CD14-positive monocyte (primary cell): ENCODE measurements at regions of chr1 and their contacts with region 1.

Region 1: DNA sequence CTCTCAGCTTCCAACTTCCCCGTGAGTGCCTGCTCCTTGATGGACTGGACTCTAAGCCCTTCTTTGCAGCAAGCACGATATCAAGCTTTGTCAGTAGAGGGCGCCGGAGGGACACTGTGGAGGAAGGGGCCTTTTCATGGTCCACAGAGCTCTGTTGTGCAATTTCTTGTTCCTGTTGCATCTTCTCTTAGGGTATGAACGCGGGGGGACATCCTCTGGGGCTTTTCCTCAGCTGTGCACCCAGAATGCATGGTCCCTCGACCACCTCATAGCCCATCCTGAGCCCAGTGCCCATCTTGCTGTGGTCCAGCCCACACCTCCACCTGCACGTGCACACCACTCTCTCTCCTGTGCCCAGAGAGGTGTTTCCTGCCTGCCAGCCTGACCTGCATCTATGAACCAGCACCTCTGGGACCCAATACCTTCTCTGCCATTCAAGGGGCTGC is 556.8 kb downstream of the PTPRU start:
- DNase-seq: peak; percentile 49 to 66 (median 59)
- H3K4me3 ChIP-seq: no peak overlapping the region
- H3K4me3 Mint-ChIP-seq: no peak overlapping the region
- H3K27ac ChIP-seq: no peak overlapping the region
- H3K27ac Mint-ChIP-seq: no peak overlapping the region
- H3K4me1 ChIP-seq: no peaks in the 10 kb centered on the region
- H3K4me1 Mint-ChIP-seq: peaks cover 3% of the 10 kb centered on the region
- H3K27me3 ChIP-seq: no peaks in the 10 kb centered on the region
- H3K27me3 Mint-ChIP-seq: peaks cover 4 to 12% (median 5%) of the 10 kb centered on the region in 3 donors
- CTCF ChIP-seq: peak; percentile 85

Region 2: DNA sequence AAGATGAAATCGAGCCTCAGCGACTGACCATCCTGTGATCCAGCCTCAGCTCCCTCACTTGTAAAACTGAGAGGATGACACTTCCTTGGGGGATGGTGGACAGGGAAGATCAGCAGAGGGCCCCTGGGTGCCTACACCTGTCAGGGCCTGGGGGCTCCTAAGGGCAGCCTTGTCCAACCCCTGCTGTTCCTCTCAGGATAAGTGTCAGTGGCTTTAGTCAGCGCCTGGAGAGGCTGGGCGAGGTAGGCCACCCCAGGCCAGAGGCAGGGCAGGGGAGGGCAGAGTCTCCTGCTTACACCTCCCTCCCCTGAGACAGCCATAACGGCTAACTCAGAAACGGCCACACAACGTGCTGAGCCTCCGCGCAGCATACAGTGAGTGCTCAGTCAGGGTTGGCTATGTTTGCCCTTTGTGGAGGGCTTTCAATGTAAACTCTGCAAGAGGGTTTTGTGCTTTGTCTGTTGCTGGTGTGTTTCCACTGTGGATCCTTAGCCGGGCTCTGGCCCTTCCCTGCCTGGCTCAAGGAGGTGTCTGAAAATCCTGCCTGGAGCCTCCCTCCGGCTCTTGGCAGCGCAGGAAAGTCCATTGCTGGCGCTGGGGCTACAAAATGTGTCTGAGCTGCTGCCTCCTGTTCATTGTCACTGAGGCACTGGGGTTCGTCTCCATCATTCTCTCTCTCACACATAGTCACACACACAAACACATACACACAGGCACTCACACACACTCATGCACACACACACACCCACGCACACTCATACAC is 31.6 kb after region 1 on chr1:
- intact Hi-C with region 1: no loop called
- DNase-seq: no peak
- H3K4me3 ChIP-seq: no peak overlapping the region
- H3K4me3 Mint-ChIP-seq: no peak overlapping the region
- H3K27ac ChIP-seq: no peak overlapping the region
- H3K27ac Mint-ChIP-seq: no peak overlapping the region
- H3K4me1 ChIP-seq: no peaks in the 10 kb centered on the region
- H3K4me1 Mint-ChIP-seq: no peaks in the 10 kb centered on the region
- H3K27me3 ChIP-seq: peaks cover 0 to 6% of the 10 kb centered on the region in 2 donors
- H3K27me3 Mint-ChIP-seq: peaks cover 2 to 8% (median 2%) of the 10 kb centered on the region in 3 donors
- CTCF ChIP-seq: no peak

Region 3: GRCh38 chr1:30085811-30086770 is 293.0 kb after region 1 on chr1:
- intact Hi-C with region 1: loop called in 1 of 2 experiments (anchors 10 kb)
- DNase-seq: peak in 1 of 3 donors; percentile 20
- H3K4me3 ChIP-seq: no peak overlapping the region
- H3K4me3 Mint-ChIP-seq: no peak overlapping the region
- H3K27ac ChIP-seq: no peak overlapping the region
- H3K27ac Mint-ChIP-seq: no peak overlapping the region
- H3K4me1 ChIP-seq: no peaks in the 10 kb centered on the region
- H3K4me1 Mint-ChIP-seq: peaks cover 7% of the 10 kb centered on the region
- H3K27me3 ChIP-seq: no peaks in the 10 kb centered on the region
- H3K27me3 Mint-ChIP-seq: peaks cover 12 to 27% (median 15%) of the 10 kb centered on the region in 3 donors
- CTCF ChIP-seq: peak; percentile 69

Region 4: DNA sequence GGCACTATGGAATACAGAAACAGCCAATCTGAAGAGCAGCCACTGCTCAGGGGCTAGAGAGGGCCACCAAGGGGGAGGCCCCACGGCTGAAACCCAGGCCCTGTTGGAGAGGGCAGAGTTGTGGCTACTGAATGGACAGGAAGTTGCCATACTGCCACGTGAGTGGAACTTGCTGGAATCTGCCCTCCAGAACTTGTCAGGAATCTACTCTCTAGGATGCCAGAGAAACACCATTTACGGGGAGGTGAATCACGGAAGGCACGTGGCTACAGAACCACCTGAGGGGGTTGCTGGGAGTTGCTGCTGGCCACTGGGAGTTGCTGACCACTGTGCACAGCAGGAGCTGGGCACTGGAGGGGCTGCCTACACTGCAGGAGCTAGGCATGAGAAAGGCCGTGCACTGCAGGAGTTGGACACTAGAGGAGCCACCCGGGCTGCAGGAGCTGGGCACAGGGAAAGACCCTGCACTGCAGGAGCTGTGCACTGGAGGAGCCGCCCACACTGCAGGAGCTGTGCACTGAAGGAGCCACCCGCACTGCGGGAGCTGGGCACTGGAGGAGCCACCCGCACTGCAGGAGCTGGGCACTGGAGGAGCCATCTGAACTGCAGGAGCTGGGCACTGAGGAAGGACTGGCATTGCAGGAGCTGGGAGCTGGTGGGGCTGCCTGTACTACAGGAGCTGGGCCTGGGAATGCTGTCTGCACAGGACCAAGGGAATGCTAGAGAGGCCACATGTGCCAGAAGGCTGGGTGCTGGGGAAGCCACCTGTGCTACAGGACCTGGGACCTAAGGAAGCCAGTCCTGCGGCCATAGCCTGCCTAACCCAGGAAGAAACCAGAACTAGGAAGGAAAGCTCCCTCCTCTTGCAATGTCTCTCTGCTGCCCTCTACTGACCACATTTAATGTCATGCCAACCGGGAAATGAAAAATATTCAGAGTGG is 586.8 kb after region 1 on chr1:
- intact Hi-C with region 1: loop called in 1 of 2 experiments (anchors 5 kb)
- DNase-seq: peak; percentile 44 to 59 (median 46)
- H3K4me3 ChIP-seq: no peak overlapping the region
- H3K4me3 Mint-ChIP-seq: no peak overlapping the region
- H3K27ac ChIP-seq: no peak overlapping the region
- H3K27ac Mint-ChIP-seq: no peak overlapping the region
- H3K4me1 ChIP-seq: peaks cover 0 to 3% of the 10 kb centered on the region in 2 donors
- H3K4me1 Mint-ChIP-seq: peaks cover 2% of the 10 kb centered on the region
- H3K27me3 ChIP-seq: no peaks in the 10 kb centered on the region
- H3K27me3 Mint-ChIP-seq: peaks cover 3 to 11% (median 7%) of the 10 kb centered on the region in 3 donors
- CTCF ChIP-seq: peak; percentile 88

Region 5: GRCh38 chr1:30707412-30708360 is 914.6 kb after region 1 on chr1:
- intact Hi-C with region 1: loop called in 1 of 2 experiments (anchors 10 kb)
- DNase-seq: peak; percentile 38 to 55 (median 42)
- H3K4me3 ChIP-seq: no peak overlapping the region
- H3K4me3 Mint-ChIP-seq: peak overlapping the region in 1 of 2 donors; percentile 36
- H3K27ac ChIP-seq: no peak overlapping the region
- H3K27ac Mint-ChIP-seq: no peak overlapping the region
- H3K4me1 ChIP-seq: no peaks in the 10 kb centered on the region
- H3K4me1 Mint-ChIP-seq: no peaks in the 10 kb centered on the region
- H3K27me3 ChIP-seq: no peaks in the 10 kb centered on the region
- H3K27me3 Mint-ChIP-seq: peaks cover 13 to 21% (median 13%) of the 10 kb centered on the region in 3 donors
- CTCF ChIP-seq: peak; percentile 84